Upper lobe of right lung (tissue), 1 donor: ENCODE measurements at regions of chr2 and their contacts with region 1.

Region 1: GRCh38 chr2:45494269-45494977 is 116.6 kb downstream of the SRBD1 start:
- DNase-seq: no peak
- ATAC-seq: peak; percentile 72
- H3K4me3 ChIP-seq: no peak overlapping the region
- H3K27ac ChIP-seq: no peak overlapping the region
- H3K4me1 ChIP-seq: no peaks in the 10 kb centered on the region
- H3K27me3 ChIP-seq: no peaks in the 10 kb centered on the region
- CTCF ChIP-seq: peak; percentile 82

Region 2: DNA sequence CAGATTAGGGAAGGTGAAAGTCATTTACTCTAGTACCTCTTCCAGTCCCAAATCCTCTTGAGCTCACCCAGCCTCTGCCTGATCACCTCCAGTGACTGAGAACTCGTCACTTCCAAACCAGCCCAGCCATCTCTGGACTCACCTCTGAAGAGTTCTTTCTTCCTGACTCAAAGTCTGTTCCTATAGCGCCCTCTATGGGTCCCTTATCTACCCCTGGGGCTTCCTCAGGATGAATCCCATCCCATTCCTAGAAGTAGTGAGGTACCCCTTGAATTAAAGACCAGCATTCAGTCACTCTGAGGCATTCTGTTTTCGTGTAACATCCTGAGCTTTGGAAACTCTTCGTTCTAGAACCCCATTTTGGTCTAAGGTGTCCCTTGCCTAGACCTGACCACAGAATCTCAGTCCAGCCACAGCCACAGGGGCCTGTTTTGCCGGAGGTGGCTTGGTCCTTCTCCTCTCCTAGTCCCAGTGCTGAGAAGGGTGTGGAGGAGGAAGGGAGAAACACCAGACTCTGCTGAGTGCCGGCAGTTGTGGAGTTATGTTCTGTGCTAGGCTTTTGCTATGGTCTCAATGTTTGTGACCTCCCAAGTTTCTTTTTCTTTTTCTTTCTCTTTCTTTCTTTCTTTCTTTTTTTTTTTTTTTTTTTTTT is 520.2 kb before region 1 on chr2:
- intact Hi-C with region 1: loop called (anchors 10 kb)
- DNase-seq: no peak
- ATAC-seq: peak; percentile 64
- H3K4me3 ChIP-seq: no peak overlapping the region
- H3K27ac ChIP-seq: no peak overlapping the region
- H3K4me1 ChIP-seq: no peaks in the 10 kb centered on the region
- H3K27me3 ChIP-seq: peaks cover 15% of the 10 kb centered on the region
- CTCF ChIP-seq: peak; percentile 34